HEK293T (cell line): ENCODE measurements at regions of chr2 and their contacts with region 1.

Region 1: DNA sequence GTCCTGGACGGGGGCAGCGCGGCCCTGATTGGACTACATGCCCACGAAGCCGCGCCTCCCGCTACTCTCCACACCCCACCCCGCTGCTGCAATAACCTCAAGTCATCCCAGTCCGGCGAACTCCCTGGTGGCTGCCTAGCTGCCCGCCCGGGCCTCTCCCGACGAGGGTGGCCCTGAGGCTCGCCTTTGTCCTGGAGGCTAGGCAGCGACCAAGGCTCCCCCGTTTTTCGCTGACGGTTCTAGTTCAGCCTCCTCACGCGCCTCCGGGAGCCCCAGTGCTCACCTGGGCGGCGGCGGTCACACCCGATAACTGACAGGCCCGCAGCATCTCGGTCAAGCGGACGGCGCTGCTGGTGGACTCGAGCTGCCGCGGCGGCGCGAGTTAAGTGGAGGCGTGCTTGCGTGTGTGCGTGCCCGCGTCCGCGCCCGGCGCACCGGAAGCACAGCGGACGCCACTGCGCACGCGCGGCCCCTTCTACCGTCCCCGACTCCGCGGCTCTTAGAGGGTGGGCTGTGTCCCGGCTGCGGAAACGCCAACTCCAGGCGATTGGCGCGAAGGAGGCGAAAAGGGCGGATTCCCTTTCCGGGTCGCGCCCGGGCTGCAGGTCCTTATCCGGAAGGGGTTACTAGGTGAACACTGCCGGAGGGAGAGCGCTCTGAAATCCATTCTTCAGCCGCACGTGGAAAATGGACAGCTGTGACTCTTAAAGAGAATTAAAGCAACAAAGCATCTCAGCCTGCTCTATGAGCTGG is at the start of gene IMMT:
- DNase-seq: peak; percentile 91

Region 2: DNA sequence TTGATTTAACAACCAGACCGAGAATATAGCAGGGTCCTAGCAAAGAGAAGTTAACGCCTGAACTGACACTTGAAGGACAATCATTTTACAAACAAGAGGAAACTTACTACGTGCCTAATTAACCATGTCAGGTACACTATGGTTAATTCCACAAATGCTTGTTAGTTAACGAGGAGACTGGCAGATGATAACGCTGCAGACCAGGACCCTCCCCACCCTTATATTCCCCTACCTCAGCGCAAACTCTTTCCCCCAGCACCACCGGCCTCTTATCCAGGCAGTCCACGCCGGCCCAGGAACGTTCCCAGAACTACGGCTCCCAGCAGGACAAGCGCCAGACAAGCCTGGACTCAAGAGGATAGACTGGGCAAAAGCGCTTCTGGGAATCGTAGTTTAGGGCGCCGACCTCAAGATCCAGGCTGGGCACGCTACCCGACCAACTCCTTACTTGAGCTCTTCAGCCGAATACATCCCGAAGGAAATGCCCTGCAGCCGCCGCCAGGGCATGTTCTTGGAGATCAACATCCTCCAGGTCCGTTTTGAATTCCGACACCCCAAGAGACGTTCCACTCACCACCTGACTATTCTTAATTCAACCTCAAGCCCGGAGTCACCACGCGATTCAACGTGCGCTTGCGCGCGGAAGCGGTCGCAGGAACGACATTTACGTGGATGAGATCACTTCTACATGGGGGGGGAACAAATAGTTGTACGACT is 89.8 kb before region 1 on chr2 and contains the start of gene POLR1A:
- CTCF ChIA-PET with region 1: no interaction called
- POLR2A ChIA-PET with region 1: interaction called, 10 read pairs
- DNase-seq: peak; percentile 81

Region 3: DNA sequence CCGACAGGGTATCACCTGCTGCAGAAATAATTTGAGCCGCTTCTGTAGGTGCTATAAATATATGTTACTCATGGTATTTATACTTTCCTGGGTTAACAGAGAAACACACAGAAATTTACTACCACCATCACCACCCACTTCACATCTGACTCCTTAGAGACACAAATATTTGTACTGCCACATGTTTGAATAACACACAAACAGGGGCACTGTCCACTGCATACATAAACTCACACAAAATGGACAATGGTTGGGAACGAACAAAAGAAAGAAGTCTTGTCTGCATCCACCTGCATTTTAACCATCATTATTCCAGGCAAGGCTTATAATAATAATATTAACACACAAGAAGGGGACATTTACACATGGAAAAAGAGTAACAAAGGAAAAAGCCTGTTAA is 23.9 kb before region 1 on chr2:
- CTCF ChIA-PET with region 1: no interaction called
- POLR2A ChIA-PET with region 1: no interaction called
- DNase-seq: no peak

Region 4: GRCh38 chr2:86254576-86255538 is 59.6 kb after region 1 on chr2:
- CTCF ChIA-PET with region 1: no interaction called
- POLR2A ChIA-PET with region 1: no interaction called
- DNase-seq: no peak